ENCODE measurements at regions of chr11 and their contacts with region 1.

Region 1: GRCh38 chr11:66579017-66579606 is 10.7 kb upstream of the CTSF start:
- DNase-seq: peak; percentile 58
- H3K4me3 Mint-ChIP-seq: no peak overlapping the region
- H3K27ac Mint-ChIP-seq: no peak overlapping the region
- H3K4me1 Mint-ChIP-seq: peaks cover 13% of the 10 kb centered on the region
- H3K27me3 Mint-ChIP-seq: peaks cover 9% of the 10 kb centered on the region

Region 2: GRCh38 chr11:66677599-66678375 is 98.7 kb after region 1 on chr11 and contains the start of gene RBM4B:
- intact Hi-C with region 1: loop called (anchors 1 kb)
- DNase-seq: peak; percentile 92
- H3K4me3 Mint-ChIP-seq: peak within 1 kb of the TSS; percentile 92
- H3K27ac Mint-ChIP-seq: peak within 1 kb of the TSS; percentile 97
- H3K4me1 Mint-ChIP-seq: peaks cover 30% of the 10 kb centered on the region
- H3K27me3 Mint-ChIP-seq: no peaks in the 10 kb centered on the region
- total RNA-seq, gene RBM4B: 16.5 and 18.4 TPM in 2 replicates

Measured in activated T-helper 2 cell treated with anti-CD3 and anti-CD28 coated beads, Interferon-gamma antibody, Interleukin-2, Interleukin-4, amounts not matched to agents 10 μg/mL and 5 μg/mL and 100 μg/mL, durations not matched to agents 14 hours and 24 hours and 36 hours (primary cell).